ENCODE measurements at regions of chr12 and their contacts with region 1.

Region 1: DNA sequence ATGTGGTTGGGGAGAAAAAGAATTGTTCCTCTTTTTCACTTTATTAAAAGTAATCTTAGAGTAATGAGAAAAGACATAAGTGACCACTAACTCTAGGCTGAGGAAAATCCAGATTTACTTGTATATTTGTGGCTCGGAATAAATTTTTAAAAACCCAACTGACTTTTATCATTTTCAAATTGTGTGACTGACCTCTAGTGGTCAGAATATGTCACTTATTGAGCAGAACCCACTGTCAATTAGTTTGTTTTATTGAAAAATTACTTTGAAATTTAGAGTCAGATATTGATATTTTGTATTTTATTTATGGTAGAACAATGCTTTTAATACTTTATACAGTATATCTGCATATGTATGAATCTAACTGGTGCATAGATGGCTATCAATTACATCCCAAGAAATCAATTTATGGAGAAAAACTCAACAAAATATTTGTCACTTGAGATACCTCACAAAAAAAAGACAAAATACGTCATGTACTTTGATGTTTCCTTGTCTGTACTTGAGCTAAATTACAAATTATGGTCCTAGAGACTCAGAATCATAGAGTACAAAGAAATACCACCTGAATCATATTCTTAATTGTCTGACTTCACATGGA is 229.4 kb downstream of the CNTN1 start:
- DNase-seq: no peak
- H3K4me3 ChIP-seq: no peak overlapping the region
- H3K27ac ChIP-seq: no peak overlapping the region
- H3K4me1 ChIP-seq: no peaks in the 10 kb centered on the region
- H3K27me3 ChIP-seq: no peaks in the 10 kb centered on the region
- CTCF ChIP-seq: peak in 5 of 6 experiments; percentile 35 to 75 (median 57)
- POLR2A ChIP-seq: no peak

Region 2: DNA sequence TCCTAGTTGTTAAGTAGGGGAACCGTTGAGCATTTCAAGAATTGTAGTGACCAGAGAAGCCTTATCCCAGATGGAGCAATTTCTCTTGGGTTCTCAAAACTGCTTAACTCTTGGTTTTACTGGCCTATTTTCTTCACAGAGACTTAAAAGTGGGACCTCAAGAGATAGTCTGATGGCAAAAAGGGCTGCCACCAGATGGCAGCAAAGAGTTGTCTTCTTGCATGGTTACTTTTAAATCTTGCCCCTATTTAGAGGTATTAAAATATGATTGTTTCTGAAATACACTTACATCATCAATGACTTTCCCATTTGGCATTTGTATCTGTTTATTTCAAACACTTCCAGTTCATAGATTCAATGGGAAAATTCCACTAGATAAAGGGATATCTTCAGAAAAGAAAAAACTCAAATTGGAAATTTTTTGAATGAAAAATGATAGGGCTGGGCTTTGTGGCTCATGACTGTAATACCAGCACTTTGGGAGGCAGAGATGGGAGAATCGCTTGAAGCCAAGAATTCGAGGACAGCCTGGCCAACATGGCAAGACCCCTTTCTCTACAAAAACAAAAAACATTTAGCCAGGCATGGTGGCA is 299.3 kb before region 1 on chr12:
- intact Hi-C with region 1: loop called (anchors 5 kb)
- DNase-seq: no peak
- H3K4me3 ChIP-seq: no peak overlapping the region
- H3K27ac ChIP-seq: no peak overlapping the region
- H3K4me1 ChIP-seq: no peaks in the 10 kb centered on the region
- H3K27me3 ChIP-seq: no peaks in the 10 kb centered on the region
- CTCF ChIP-seq: peak; percentile 35 to 76 (median 64)
- POLR2A ChIP-seq: no peak

Measured in esophagus squamous epithelium (tissue), 5 donors.